Activated CD8-positive, alpha-beta T cell treated with anti-CD3 and anti-CD28 coated beads for 36 hours (primary cell): ENCODE measurements at regions of chr3 and their contacts with region 1.

Region 1: GRCh38 chr3:111539351-111540331 is 2.4 kb upstream of the CD96 start:
- DNase-seq: peak; percentile 74
- ATAC-seq: peak; percentile 41
- H3K4me3 Mint-ChIP-seq: peak overlapping the region; percentile 67
- H3K27ac Mint-ChIP-seq: no peak overlapping the region
- H3K4me1 Mint-ChIP-seq: peaks cover 65% of the 10 kb centered on the region
- H3K27me3 Mint-ChIP-seq: no peaks in the 10 kb centered on the region
- CTCF ChIP-seq: peak; percentile 95

Region 2: GRCh38 chr3:109806929-109807328 is 1732.7 kb before region 1 on chr3:
- CTCF ChIA-PET with region 1: no interaction called
- POLR2A ChIA-PET with region 1: no interaction called
- intact Hi-C with region 1: loop called (anchors 10 kb)
- DNase-seq: peak; percentile 53
- ATAC-seq: peak; percentile 86
- H3K4me3 Mint-ChIP-seq: peak overlapping the region; percentile 33
- H3K27ac Mint-ChIP-seq: peak overlapping the region; percentile 65
- H3K4me1 Mint-ChIP-seq: peaks cover 43% of the 10 kb centered on the region
- H3K27me3 Mint-ChIP-seq: no peaks in the 10 kb centered on the region
- CTCF ChIP-seq: no peak

Region 3: GRCh38 chr3:111238885-111239284 is 300.8 kb before region 1 on chr3:
- CTCF ChIA-PET with region 1: no interaction called
- POLR2A ChIA-PET with region 1: no interaction called
- intact Hi-C with region 1: loop called (anchors 10 kb)
- DNase-seq: peak; percentile 27
- ATAC-seq: peak; percentile 96
- H3K4me3 Mint-ChIP-seq: no peak overlapping the region
- H3K27ac Mint-ChIP-seq: no peak overlapping the region
- H3K4me1 Mint-ChIP-seq: peaks cover 30% of the 10 kb centered on the region
- H3K27me3 Mint-ChIP-seq: no peaks in the 10 kb centered on the region
- CTCF ChIP-seq: no peak

Region 4: GRCh38 chr3:111594205-111594604 is 54.6 kb after region 1 on chr3:
- CTCF ChIA-PET with region 1: interaction called, 4 read pairs
- POLR2A ChIA-PET with region 1: interaction called, 11 read pairs
- intact Hi-C with region 1: no loop called
- DNase-seq: no peak
- ATAC-seq: peak; percentile 12
- H3K4me3 Mint-ChIP-seq: peak overlapping the region; percentile 97
- H3K27ac Mint-ChIP-seq: peak overlapping the region; percentile 97
- H3K4me1 Mint-ChIP-seq: peaks cover 64% of the 10 kb centered on the region
- H3K27me3 Mint-ChIP-seq: no peaks in the 10 kb centered on the region
- CTCF ChIP-seq: no peak

Region 5: DNA sequence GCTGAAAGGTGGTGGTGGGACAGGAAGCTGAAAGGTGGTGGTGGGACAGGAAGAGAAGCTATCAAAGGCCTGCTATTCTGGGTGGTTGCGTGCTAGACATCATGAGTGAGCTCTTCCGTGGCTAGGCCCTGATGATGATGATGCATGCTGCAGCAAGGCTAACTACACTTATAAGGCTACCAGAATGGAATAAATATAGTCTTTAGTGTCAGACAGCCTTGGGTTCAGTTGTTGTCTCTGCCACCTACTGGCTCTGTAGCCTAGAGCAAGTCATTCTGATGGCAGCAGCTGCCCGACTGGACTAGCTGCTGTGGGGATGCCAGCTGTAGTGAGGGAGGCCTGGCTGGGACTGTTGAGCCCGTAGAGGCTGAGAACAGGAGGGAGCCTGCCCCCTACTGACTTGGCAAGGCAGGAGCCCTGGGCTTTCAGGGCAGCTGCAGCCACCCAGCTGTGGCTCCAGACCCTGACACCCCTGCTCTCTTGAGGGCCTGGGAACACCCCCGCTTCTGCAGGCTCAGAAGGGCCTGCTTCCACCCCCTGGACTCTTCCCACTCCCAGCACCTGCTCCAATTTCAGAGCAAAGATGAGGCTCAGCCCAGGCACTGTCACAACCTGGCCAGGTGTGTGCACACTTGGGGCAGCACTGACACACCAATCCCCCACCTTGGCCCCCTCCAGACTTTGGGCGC is 76.9 kb after region 1 on chr3:
- CTCF ChIA-PET with region 1: interaction called, 54 read pairs
- POLR2A ChIA-PET with region 1: interaction called, 12 read pairs
- intact Hi-C with region 1: loop called (anchors 2 kb)
- DNase-seq: peak; percentile 82
- ATAC-seq: peak; percentile 83
- H3K4me3 Mint-ChIP-seq: peak overlapping the region; percentile 30
- H3K27ac Mint-ChIP-seq: peak overlapping the region; percentile 93
- H3K4me1 Mint-ChIP-seq: peaks cover 80% of the 10 kb centered on the region
- H3K27me3 Mint-ChIP-seq: no peaks in the 10 kb centered on the region
- CTCF ChIP-seq: peak; percentile 62